Right ventricle myocardium inferior (tissue), 1 donor: ENCODE measurements at regions of chr18 and their contacts with region 1.

Region 1: GRCh38 chr18:27017901-27018500 is 152.5 kb upstream of the AQP4 start:
- DNase-seq: no peak
- ATAC-seq: no peak

Region 2: GRCh38 chr18:27120246-27120645 is 102.2 kb after region 1 on chr18:
- intact Hi-C with region 1: no loop called
- DNase-seq: no peak
- ATAC-seq: no peak

Region 3: DNA sequence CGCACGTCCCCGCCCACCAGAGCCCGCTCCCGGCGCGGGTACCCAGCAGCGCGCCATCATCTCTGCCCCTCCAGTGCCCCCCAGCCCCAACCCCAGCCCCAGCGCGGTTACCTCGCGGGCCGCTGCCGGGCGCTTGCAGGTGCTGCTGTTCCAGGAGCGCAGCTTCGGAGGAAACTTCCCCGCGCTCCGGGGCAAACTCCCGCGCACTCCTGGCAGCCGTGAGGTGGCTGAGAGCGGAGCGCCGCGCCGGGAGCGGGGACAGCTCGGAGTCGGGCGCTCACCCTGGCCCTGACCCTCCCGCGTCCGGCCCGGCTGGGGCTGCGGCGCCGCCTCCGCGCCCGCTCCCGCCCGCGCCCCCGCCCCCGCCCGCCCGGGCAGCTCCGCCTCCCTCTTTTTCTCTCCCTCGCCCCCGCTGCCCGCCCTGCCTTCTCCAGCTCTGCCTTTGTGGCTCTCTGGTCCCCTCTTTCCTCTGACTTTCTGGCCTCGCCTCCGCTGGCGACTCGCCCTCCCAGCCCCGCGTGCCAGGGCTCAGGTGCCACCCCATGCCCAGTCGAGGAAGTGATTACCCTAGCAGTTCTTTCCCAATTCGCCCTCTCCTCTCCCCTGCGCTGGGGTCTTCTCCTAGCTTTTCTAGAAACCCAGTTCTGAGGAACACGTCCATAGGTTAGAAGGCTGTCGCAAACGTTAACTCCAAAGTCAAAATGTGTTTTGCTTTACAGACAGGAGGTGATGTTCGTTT is 167.2 kb after region 1 on chr18 and contains the start of gene CHST9:
- intact Hi-C with region 1: loop called (anchors 2 kb)
- DNase-seq: peak; percentile 59
- ATAC-seq: peak; percentile 86
- total RNA-seq, gene CHST9: 8.3 TPM

Region 4: DNA sequence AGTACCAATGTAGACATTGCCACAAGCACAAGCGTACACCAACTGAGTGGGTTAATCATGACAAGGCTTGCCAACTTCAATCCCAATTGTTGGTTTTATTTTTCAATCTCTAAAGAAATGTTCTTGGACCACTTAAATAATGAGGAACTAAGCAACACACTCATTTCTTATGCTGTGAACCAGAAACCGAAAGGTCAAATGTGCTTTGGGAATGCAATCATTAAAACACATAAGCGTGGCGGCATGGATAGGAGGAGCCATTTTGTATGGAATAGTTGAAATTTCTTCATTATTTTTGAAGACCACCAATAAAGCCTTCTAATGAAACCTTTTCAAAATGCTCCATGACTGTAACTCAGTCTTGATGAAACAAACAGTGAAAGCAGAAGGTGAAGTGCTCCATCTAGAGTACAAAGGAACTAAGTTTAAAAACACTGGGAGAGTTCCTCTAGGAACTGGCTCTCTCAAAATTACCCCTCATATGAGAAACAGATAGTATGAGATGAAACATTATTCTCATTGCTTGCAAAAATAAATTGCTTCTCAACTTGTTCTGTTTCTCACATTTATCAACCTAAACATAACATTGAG is 280.3 kb after region 1 on chr18:
- intact Hi-C with region 1: loop called (anchors 1 kb)
- DNase-seq: no peak
- ATAC-seq: no peak